ENCODE measurements at regions of chr6 and their contacts with region 1.

Region 1: DNA sequence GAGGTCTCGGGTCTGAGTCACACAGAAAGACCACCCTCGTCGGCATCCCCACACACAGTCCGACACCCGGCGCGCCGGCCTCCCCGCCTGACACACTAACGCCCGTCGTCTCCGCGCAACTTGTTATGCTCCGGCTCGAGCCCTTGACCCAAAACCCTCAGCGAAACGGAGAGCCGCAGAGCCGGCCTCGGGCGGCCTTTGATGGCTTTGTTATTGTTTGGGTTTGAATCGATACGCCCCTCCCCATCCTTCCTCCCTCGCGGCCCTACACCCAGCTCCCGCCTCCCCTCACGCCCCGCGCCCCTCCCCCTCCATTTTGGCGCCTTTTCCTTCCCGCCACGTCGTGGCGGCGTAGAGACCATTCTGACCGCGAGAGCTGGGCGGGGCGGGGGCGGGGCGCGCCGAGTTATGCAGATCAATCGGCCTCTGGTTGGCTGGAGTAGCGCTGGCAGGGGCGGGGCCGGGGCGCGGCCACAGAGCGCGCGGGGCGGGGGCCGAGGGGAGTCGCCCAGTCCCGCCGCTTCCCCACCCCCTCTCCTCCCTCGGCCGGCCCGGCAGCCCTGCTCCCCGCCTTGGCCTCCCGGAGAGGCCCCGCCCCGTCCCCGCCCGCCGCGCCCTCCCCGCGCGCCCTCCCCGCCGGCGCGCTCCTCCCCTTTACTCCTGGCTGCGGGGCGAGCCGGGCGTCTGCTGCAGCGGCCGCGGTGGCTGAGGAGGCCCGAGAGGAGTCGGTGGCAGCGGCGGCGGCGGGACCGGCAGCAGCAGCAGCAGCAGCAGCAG is at the start of gene PIM1:
- DNase-seq: peak in 1 of 2 donors; percentile 98
- H3K4me3 ChIP-seq: peak within 1 kb of the TSS; percentile 91 to 93
- H3K27ac ChIP-seq: peak within 1 kb of the TSS; percentile 97
- H3K4me1 ChIP-seq: peaks cover 29% of the 10 kb centered on the region
- H3K27me3 ChIP-seq: no peaks in the 10 kb centered on the region
- CTCF ChIP-seq: peak in 1 of 3 experiments; percentile 18
- POLR2A ChIP-seq: peak in 1 of 2 donors; percentile 93
- total RNA-seq, gene PIM1: 74.2 TPM

Region 2: DNA sequence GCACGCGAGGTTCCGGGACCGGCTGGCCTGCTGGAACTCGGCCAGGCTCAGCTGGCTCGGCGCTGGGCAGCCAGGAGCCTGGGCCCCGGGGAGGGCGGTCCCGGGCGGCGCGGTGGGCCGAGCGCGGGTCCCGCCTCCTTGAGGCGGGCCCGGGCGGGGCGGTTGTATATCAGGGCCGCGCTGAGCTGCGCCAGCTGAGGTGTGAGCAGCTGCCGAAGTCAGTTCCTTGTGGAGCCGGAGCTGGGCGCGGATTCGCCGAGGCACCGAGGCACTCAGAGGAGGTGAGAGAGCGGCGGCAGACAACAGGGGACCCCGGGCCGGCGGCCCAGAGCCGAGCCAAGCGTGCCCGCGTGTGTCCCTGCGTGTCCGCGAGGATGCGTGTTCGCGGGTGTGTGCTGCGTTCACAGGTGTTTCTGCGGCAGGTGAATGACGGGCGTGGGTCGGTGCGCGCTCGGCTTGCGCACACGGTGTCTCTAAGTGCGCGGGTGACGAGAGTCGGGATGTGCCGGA is 491.1 kb before region 1 on chr6 and contains the start of gene CDKN1A:
- intact Hi-C with region 1: no loop called
- DNase-seq: no peak
- H3K4me3 ChIP-seq: peak within 1 kb of the TSS; percentile 78 to 83
- H3K27ac ChIP-seq: peak within 1 kb of the TSS; percentile 99
- H3K4me1 ChIP-seq: peaks cover 58% of the 10 kb centered on the region
- H3K27me3 ChIP-seq: no peaks in the 10 kb centered on the region
- CTCF ChIP-seq: peak in 1 of 3 experiments; percentile 17
- POLR2A ChIP-seq: peak in 1 of 2 donors; percentile 99
- total RNA-seq, gene CDKN1A: 169 TPM

Region 3: GRCh38 chr6:37051138-37052026 is 118.3 kb before region 1 on chr6:
- intact Hi-C with region 1: loop called (anchors 2 kb)
- DNase-seq: no peak
- H3K4me3 ChIP-seq: no peak overlapping the region
- H3K27ac ChIP-seq: no peak overlapping the region
- H3K4me1 ChIP-seq: peaks cover 37% of the 10 kb centered on the region
- H3K27me3 ChIP-seq: no peaks in the 10 kb centered on the region
- CTCF ChIP-seq: peak; percentile 60 to 92 (median 79)
- POLR2A ChIP-seq: no peak

Region 4: DNA sequence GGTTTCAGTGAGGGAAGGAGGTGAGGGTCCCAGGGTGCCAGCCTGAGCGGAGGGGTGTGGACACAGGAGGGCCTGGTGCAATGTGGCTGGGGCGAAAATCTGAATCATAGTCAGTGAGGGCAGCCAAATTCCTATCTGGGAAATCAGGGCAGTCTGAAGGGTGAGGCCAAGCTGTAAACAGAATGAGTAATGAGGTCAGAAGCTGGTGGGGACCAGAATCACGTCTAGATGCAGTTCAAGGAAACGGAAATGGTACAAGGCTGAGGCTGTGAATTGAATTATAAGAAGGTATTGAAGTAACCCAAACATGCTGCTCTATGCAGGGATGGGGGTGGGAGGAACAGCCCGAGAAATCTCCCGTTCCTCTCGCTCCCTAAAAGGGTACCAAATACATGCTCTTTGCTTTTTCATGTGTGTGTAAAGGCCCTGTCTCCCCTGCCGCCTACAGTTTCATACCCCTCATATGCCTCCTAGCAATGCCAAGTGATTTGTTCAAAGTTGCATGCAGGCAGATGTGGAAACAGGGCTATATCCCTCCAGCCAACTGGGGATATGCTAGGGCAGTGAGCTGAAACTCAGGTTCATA is 35.0 kb before region 1 on chr6:
- intact Hi-C with region 1: loop called (anchors 5 kb)
- DNase-seq: no peak
- H3K4me3 ChIP-seq: no peak overlapping the region
- H3K27ac ChIP-seq: peak overlapping the region; percentile 69
- H3K4me1 ChIP-seq: peaks cover 55% of the 10 kb centered on the region
- H3K27me3 ChIP-seq: no peaks in the 10 kb centered on the region
- CTCF ChIP-seq: no peak
- POLR2A ChIP-seq: no peak

Region 5: GRCh38 chr6:37141281-37142049 is 28.2 kb before region 1 on chr6:
- intact Hi-C with region 1: loop called (anchors 1 kb)
- DNase-seq: no peak
- H3K4me3 ChIP-seq: no peak overlapping the region
- H3K27ac ChIP-seq: peak overlapping the region; percentile 40
- H3K4me1 ChIP-seq: peaks cover 15% of the 10 kb centered on the region
- H3K27me3 ChIP-seq: no peaks in the 10 kb centered on the region
- CTCF ChIP-seq: no peak
- POLR2A ChIP-seq: no peak

Region 6: DNA sequence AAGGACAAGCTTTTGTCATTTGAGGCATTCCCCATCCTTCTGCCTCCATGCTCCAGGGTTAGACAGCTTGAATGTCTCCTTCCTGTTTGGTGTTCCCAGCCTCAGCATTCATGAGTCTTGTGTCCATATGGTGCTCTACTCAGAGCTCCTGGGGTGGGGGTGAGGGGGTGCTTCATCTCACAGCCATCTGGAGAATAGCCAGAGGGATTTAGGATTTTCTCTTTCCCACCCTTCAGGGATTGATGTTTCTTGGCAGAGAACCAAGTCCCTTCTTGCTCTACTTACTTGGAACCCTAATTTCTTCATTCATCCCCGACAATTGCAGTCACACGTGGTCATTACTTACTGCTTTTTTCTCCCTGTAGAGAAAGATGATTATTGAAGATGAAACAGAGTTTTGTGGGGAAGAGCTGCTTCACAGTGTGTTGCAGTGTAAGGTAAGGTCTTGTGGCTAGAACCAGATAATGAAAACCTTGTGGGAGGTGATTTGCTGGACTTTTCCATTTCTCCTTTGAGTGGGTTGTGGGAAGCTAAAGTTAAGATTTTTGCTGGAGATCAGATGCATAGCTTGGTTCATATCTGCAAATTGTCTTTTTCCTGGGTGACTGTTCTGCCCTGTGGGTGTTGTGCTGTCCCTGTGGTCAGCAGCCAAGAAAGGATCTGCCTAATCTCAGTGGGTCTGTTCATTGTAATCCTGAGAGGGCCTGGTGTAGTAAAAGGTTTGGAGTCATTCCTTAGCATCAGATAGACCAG is 281.9 kb after region 1 on chr6:
- intact Hi-C with region 1: no loop called
- DNase-seq: no peak
- H3K4me3 ChIP-seq: no peak overlapping the region
- H3K27ac ChIP-seq: no peak overlapping the region
- H3K4me1 ChIP-seq: no peaks in the 10 kb centered on the region
- H3K27me3 ChIP-seq: no peaks in the 10 kb centered on the region
- CTCF ChIP-seq: no peak
- POLR2A ChIP-seq: no peak

Region 7: DNA sequence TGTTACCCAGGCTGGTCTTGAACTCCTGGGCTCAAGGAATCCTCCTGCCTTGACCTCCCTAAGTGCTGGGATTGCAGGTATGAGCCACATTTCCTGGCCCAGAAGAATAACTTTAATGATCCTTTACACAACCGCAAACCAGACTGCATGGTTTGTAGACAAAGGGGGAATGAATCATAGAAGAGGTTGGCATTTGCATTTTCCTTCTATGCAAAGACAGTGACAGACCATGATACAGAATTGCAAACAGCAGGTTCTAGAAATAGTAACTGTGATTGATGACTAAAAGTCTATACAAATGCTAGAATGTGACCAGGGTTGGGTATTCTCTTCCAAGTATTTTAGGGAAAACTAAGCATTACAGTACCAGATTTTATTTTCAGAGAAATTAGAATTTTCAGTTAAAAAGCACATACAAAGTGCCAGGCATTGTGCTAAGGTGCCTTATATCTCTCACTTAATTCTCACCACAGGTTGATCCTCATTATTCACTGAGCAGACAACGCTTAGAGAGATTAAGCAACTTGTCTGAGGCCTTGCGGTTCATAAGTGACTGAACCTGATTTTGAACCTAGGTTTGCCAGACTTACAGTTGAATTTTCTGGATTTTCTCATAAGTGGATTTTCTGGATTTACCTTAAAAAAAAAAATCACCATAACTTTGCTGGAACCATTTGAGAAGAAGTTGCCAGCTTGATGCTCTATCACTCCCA is 796.4 kb after region 1 on chr6:
- intact Hi-C with region 1: no loop called
- DNase-seq: no peak
- H3K4me3 ChIP-seq: no peak overlapping the region
- H3K27ac ChIP-seq: no peak overlapping the region
- H3K4me1 ChIP-seq: peaks cover 11% of the 10 kb centered on the region
- H3K27me3 ChIP-seq: no peaks in the 10 kb centered on the region
- CTCF ChIP-seq: no peak
- POLR2A ChIP-seq: no peak

Measured in vagina (tissue), 2 donors.